ENCODE measurements at regions of chr6 and their contacts with region 1.

Region 1: GRCh38 chr6:35786810-35787209 is 6.0 kb downstream of the CLPSL1 start:
- DNase-seq: no peak
- H3K4me3 ChIP-seq: no peak overlapping the region
- CTCF ChIP-seq: no peak

Region 2: DNA sequence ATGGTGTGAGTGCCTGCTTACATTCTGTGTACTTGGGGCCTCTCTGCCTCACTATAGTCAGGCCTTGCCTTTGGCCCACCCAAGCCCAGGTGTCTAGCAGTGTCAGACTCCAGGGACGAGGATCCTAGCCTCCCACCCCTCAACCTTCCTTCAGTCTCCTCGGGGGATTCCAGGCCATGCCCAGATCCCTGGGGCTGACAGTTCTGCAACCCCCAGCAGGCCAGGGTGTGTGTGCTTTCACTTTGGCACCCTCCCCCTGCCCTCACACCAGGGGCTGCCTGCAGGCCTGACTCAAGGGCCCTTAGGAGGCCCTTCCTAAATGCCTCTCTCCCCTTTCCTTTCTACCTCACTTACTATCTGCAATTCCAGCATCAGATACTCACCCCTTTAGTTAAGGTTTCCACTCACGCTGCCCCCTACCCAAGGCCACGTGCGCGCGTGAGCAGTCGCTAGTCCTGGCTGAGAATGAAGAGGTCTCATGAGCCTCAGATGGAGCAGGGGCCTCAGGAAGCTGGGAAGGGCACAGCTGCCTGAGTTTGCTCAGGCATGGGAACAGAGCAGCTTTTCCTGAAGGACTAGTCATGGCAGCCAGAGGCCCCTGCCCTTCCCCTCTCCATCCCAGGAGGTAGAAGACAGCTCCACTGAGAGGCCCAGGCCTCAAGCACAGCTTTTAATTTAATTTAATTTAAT is 11.2 kb after region 1 on chr6:
- CTCF ChIA-PET with region 1: interaction called, 33 read pairs
- POLR2A ChIA-PET with region 1: interaction called, 6 read pairs
- DNase-seq: no peak
- H3K4me3 ChIP-seq: no peak overlapping the region
- CTCF ChIP-seq: no peak